Head of caudate nucleus (tissue), 42 donors: ENCODE measurements at regions of chr2 and their contacts with region 1.

Region 1: DNA sequence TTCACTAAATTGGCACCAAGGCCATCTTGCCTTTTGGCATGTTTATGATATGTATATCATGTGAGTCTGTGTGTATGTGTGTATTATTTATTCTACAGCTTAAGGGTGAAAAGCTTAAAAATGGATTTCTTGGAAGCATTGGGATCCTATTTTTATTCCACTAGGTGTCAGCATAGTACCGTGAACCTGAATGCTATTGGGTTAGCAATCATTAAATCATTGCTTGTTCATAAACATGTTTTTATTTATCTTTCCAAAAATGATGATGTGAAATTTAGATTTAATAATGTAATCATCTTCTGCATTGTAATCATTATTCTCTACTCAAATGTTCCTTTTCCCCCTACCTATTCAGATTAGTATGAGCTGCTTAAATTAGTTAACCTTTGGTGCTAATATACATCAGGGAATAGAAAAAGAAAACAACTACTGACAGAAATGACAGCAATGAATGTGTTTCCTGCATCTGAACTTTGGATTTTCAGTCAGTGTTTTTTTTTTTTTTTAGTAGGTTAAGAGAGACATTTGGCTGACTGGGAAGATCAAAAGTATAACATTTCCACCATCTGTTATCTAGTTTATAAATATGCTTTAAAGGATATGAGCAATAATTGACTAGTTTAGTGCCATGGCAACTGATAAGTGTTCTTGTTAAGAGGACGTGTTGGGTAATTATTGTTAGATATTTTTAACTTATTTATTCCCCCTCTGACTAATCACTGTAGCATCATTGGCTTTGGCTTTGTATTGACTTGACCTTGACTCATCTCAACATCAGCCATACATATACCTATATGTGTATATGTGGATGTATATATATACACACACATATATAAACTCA is 14.1 kb upstream of the ZSWIM2 start:
- DNase-seq: peak in 1 of 42 donors; percentile 22

Region 2: DNA sequence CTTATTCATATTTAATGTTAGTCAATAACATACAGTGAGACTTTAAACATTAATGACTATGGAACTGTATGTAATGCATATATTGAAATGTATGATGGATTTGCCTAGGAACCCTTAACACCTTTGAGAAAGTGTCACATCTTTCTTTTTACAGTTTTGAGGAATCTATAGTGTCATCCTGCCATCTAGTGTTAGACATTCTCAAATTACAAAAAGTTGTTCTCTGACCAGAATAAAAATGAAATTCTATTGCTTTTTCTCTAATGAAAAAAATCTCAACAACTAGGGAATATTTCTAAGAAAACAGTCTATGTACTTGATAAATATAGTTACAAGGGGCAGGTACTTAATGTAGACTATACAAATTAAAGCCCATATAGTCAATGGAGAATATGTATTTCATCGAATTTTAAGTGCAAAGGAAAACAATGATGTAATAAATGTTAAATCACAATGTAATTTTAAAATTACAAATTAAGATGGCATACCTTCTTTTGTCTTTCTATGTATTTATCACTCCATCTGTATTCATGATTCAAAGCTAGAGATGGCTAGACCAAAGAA is 590.1 kb after region 1 on chr2:
- intact Hi-C with region 1: loop called (anchors 10 kb)
- DNase-seq: no peak

Region 3: DNA sequence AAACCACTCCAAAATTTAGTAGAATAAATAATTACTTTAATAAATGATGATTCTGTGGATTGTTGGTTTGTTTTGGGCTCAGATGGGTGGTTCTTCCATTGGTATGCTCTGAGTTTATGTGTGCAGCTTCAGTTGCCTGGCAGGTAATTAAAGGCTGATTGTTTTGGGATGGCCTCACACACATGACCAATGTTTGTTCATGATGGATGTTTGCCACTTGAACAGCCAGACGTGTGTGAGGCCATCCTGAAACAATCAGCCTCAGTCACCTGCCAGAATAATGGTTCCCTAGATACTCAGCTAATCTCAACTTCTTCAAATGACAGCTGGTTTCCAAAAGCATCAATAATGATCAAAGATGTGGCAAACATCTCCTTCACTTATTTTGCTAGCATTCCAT is 1076.1 kb after region 1 on chr2:
- intact Hi-C with region 1: no loop called
- DNase-seq: no peak